ENCODE measurements at regions of chr10 and their contacts with region 1.

Region 1: GRCh38 chr10:87829986-87830729 is 12.1 kb upstream of the ATAD1 start:
- DNase-seq: no peak
- H3K4me3 ChIP-seq: no peak overlapping the region
- H3K27ac ChIP-seq: no peak overlapping the region
- H3K4me1 ChIP-seq: no peaks in the 10 kb centered on the region
- CTCF ChIP-seq: no peak

Region 2: GRCh38 chr10:87761892-87762291 is 68.3 kb before region 1 on chr10:
- CTCF ChIA-PET with region 1: no interaction called
- POLR2A ChIA-PET with region 1: no interaction called
- intact Hi-C with region 1: no loop called
- DNase-seq: no peak
- H3K4me3 ChIP-seq: no peak overlapping the region
- H3K27ac ChIP-seq: no peak overlapping the region
- H3K4me1 ChIP-seq: no peaks in the 10 kb centered on the region
- CTCF ChIP-seq: no peak

Region 3: DNA sequence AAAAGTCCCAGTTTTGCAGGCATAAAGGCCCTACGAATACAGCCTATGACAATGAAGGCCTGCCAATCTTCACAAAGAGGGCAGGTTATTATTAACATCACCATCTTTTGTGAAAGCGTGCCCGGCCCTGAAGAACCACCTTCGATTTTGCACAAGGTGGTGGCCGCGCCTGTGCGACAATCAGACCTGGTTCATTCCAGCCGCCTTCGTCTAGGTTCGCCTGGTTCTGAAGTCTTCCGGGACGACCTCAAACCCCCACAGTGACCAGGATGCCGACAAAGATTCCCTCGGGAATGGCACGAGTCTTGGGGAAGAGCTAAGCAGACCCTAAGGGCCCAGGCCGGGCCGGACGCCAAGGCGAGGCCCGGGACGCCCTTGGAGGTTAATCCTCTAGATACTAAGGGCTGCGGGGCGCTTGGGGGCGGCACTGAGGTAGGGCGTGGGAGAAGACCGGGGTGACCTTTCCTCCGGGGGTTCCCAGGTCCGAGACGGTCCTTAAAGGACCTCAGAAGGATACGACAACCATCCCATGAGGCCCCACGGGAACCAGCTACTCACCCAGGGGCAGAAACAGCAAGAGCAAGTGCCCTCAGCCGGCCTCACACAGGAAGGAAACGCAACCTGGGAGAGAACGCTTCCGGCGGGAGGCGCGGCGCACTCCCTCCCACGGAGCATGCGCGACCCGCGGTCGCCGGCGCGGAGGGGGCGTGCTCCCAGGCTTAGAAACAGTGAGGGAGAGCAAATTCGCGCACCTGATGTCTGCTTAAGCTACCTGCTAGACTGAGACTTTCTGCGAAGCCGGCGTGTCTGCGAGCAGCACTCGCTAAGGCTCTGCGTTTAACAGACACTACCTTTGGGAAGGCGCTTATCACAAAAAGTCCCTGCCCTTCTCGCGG is 12.3 kb before region 1 on chr10 and contains the start of gene ATAD1:
- CTCF ChIA-PET with region 1: no interaction called
- POLR2A ChIA-PET with region 1: interaction called, 18 read pairs
- intact Hi-C with region 1: no loop called
- DNase-seq: peak; percentile 93
- H3K4me3 ChIP-seq: peak within 1 kb of the TSS; percentile 86
- H3K27ac ChIP-seq: peak within 1 kb of the TSS; percentile 79
- H3K4me1 ChIP-seq: peaks cover 28% of the 10 kb centered on the region
- CTCF ChIP-seq: peak; percentile 28; the same call in 1 of the 2 replicates
- total RNA-seq, gene ATAD1: 17.7 and 19.6 TPM in 2 replicates

Region 4: GRCh38 chr10:87842776-87843497 is 12.8 kb after region 1 on chr10:
- CTCF ChIA-PET with region 1: no interaction called
- POLR2A ChIA-PET with region 1: interaction called, 13 read pairs
- intact Hi-C with region 1: no loop called
- DNase-seq: no peak
- H3K4me3 ChIP-seq: no peak overlapping the region
- H3K27ac ChIP-seq: no peak overlapping the region
- H3K4me1 ChIP-seq: no peaks in the 10 kb centered on the region
- CTCF ChIP-seq: no peak

Measured in OCI-LY7 (cell line).